Left cardiac atrium (tissue), 4 donors: ENCODE measurements at regions of chr3 and their contacts with region 1.

Region 1: DNA sequence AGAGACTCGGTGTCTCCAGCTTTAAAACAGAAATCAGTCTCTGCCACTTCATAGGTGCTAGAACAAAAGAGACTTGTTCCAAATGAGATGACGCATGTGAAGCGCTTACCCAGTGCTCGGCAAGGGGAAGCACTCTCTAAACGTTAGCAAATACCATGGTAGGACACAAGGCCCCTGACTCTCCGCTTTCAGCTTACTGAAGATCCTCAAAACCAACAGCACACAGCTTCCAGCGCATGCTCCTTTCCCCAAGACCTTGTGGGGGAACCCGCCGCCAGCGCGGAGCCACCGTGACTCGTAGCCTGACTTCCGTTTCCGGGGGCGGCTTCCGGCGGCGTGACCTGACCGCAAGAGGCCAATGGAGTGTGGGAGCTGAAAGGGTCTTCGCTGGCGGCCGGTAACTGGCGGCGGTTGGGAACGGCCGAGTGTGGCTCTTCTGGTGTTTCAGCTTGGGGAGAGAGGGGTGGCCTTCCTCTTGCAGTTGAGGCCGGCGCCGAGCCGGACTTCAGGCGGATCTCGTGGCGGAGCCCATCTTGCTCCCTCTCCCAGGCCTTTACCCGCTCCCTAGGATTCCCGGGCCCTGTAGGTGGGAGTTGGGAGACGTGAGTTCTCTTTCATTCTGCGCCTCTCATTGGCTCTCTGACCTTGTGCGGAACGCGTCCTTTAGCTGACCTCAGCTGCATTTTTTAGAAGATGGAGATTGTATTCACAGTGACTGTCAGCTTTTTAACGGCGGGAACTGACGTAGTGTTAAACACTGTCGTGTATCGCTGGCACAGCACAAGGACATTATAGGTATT is at the start of gene THUMPD3:
- DNase-seq: peak; percentile 95
- ATAC-seq: peak; percentile 99
- total RNA-seq, gene THUMPD3: 42.8 to 48.7 TPM

Region 2: GRCh38 chr3:9280451-9281219 is 82.3 kb before region 1 on chr3:
- intact Hi-C with region 1: no loop called
- DNase-seq: no peak
- ATAC-seq: no peak

Region 3: GRCh38 chr3:9298236-9298635 is 64.7 kb before region 1 on chr3:
- intact Hi-C with region 1: no loop called
- DNase-seq: no peak
- ATAC-seq: no peak

Region 4: GRCh38 chr3:9399746-9400145 is 36.8 kb after region 1 on chr3:
- intact Hi-C with region 1: loop called in 1 of 2 experiments (anchors 2 kb)
- DNase-seq: peak; percentile 82
- ATAC-seq: peak; percentile 9

Region 5: DNA sequence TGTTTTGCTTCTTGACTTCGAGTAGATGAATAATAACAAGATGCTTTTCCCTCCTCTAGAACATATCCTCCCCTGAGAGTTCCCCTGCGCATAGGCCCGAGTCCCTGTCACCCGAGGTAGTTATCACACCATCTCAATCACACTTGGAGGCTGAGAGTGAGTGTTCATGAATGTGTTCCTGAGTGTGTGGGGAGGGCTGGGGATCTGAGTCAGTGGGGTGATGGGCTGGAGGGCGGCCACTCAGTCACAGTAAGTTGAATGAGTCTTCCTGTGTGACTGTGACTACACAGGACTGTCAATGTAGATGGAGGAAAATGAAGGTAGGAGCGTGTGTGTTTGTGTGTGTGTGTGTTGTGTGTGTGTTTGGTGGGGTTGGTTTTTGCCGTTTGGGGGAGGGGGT is 105.5 kb after region 1 on chr3:
- intact Hi-C with region 1: no loop called
- DNase-seq: no peak
- ATAC-seq: peak in 1 of 2 donors; percentile 83